ENCODE measurements at regions of chr20 and their contacts with region 1.

Region 1: GRCh38 chr20:266596-267562 is 9.4 kb downstream of the DEFB132 start:
- DNase-seq: peak; percentile 96
- H3K4me3 Mint-ChIP-seq: peak overlapping the region; percentile 80
- H3K27ac Mint-ChIP-seq: peak overlapping the region; percentile 42
- H3K4me1 Mint-ChIP-seq: peaks cover 11% of the 10 kb centered on the region
- H3K27me3 Mint-ChIP-seq: peaks cover 10% of the 10 kb centered on the region

Region 2: GRCh38 chr20:208942-209566 is 57.8 kb before region 1 on chr20:
- intact Hi-C with region 1: loop called (anchors 1 kb)
- DNase-seq: peak; percentile 79
- H3K4me3 Mint-ChIP-seq: no peak overlapping the region
- H3K27ac Mint-ChIP-seq: no peak overlapping the region
- H3K4me1 Mint-ChIP-seq: no peaks in the 10 kb centered on the region
- H3K27me3 Mint-ChIP-seq: peaks cover 32% of the 10 kb centered on the region

Region 3: GRCh38 chr20:235891-236290 is 31.0 kb before region 1 on chr20:
- intact Hi-C with region 1: loop called (anchors 2 kb)
- DNase-seq: peak; percentile 50
- H3K4me3 Mint-ChIP-seq: no peak overlapping the region
- H3K27ac Mint-ChIP-seq: no peak overlapping the region
- H3K4me1 Mint-ChIP-seq: peaks cover 19% of the 10 kb centered on the region
- H3K27me3 Mint-ChIP-seq: no peaks in the 10 kb centered on the region

Region 4: DNA sequence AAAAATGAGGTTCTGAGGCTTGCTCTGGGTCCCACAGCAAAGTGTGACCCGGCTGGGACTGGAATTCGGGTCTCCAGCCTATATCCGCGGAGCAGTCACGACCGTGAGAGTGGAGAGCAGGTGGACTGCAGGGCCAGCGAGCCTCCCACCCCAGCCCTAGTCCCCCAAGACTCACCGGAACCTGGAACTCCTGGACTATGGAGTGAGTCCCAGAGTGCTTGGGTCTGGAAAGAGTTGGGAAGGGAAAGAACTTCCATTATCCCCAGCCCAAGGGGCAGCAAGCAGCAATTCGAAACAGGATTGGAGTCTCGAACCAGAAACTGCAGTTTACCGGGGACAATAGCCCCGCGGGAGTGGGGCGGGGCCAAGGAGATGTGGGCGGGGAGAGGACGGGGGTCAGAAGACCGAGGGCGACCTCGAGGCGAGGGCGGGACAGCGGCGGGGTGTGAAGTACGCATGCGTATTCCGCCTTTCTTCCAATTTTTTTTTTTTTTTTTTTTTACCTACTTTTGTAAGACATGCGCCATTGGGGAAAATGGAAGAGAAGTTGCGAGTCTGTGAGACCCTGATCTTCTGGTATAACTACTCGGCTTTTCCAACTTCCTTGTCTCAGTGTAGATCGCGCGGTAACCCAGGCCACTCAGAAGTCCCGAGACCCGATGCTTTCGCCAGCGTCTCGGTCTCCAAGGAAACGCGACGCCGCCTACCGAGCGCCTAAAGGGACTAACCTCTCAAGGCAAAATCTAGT is 23.4 kb after region 1 on chr20 and contains the start of gene C20orf96:
- intact Hi-C with region 1: loop called (anchors 1 kb)
- DNase-seq: peak; percentile 97
- H3K4me3 Mint-ChIP-seq: no peak within 1 kb of the TSS
- H3K27ac Mint-ChIP-seq: no peak within 1 kb of the TSS
- H3K4me1 Mint-ChIP-seq: peaks cover 25% of the 10 kb centered on the region
- H3K27me3 Mint-ChIP-seq: no peaks in the 10 kb centered on the region
- total RNA-seq, gene C20orf96: 5.7 and 6.7 TPM in 2 replicates

Region 5: DNA sequence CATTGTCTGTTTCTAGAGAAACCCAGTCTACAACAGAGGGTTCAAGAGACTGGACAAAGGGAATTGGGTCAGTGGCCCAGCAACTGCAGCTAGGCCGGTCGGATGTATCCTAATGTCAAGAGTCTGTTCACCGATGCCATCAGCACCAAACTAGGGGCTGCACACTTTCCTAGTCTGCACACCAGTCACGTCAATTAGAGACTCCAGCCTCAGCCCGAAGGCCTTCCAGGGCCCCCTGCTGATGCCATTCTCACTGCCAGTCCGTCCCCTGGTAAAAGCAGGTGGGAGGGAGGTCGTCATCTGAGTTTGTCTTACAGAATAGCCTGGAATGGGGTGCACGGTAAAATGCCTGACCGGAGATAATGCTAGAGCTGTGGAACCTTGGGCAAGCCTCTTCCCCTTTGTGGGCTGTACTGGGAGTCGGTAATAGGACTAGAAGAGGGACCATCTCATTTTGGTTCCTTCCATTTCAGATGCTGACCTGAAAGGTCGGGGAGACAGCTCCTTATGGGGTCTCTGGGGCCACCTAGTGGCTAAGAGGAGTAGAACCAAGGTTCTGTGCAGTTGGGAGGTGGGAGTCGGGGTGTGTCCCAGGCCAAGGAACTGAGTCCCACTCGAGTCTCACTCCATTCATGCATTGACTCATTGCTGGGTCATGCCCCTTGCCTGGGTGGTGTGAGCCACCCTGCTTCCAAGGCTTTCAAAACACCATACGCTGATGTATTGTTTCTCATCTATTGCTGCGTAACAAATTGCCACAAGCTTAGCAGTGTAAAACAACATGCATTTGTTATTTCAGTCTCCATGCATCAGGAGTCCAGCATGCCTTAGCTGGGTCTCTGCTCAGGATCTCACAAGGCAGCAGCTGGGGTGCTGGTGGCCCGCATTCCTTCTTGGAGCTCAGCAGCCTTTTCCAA is 63.6 kb after region 1 on chr20:
- intact Hi-C with region 1: loop called (anchors 2 kb)
- DNase-seq: peak; percentile 88
- H3K4me3 Mint-ChIP-seq: no peak overlapping the region
- H3K27ac Mint-ChIP-seq: peak overlapping the region; percentile 12
- H3K4me1 Mint-ChIP-seq: peaks cover 15% of the 10 kb centered on the region
- H3K27me3 Mint-ChIP-seq: peaks cover 2% of the 10 kb centered on the region